PC-3 (cell line): ENCODE measurements at regions of chr4 and their contacts with region 1.

Region 1: GRCh38 chr4:38675146-38676121 is 11.4 kb downstream of the KLF3 start:
- DNase-seq: peak; percentile 87
- ATAC-seq: peak; percentile 16; the same call in 1 of the 2 replicates
- H3K4me3 ChIP-seq: peak overlapping the region; percentile 46; the same call in 1 of the 2 replicates
- H3K27ac ChIP-seq: peak overlapping the region; percentile 85
- H3K4me1 ChIP-seq: peaks cover 51% of the 10 kb centered on the region
- H3K27me3 ChIP-seq: no peaks in the 10 kb centered on the region
- CTCF ChIP-seq: peak; percentile 88

Region 2: DNA sequence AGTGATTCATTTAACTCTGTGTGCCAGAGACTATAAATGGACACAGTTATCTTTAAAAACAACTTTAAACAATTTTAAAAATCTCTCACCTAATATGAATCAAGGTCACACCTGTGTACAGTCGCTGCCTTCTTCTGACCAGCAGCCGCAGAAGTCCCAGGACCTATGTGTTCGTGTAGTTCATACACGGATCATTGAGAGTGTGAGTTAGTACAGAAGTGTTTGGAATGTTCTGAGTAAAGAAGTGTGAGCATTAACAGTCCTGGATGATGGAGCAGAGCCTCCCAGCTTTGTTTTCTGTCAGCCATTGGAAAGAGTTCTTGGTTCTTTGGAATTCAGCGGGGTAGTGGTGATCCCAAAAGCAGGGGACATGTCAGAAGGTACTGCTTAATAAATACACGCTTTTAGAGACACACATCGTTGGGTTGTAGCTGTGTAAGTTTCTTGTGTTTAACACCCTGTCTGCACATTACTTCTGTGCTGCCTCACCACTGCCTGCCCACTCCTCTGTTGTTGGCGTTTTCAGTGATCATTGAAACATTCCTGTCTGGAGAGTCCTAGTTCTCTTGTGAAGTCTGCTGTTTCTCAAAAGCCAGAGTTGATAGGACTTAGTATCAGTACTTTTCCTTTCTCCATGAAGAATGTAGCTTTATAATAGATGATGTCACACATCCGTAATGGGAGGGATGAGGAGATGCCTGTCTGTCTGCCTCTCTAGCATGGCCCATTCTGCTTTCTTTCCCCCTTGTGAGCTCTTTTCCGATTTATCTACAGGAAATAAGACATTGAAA is 624.7 kb before region 1 on chr4:
- CTCF ChIA-PET with region 1: no interaction called
- POLR2A ChIA-PET with region 1: no interaction called
- intact Hi-C with region 1: loop called (anchors 5 kb)
- DNase-seq: no peak
- ATAC-seq: no peak
- H3K4me3 ChIP-seq: peak overlapping the region; percentile 60; the same call in 1 of the 2 replicates
- H3K27ac ChIP-seq: peak overlapping the region; percentile 68
- H3K4me1 ChIP-seq: peaks cover 30% of the 10 kb centered on the region
- H3K27me3 ChIP-seq: no peaks in the 10 kb centered on the region
- CTCF ChIP-seq: no peak

Region 3: DNA sequence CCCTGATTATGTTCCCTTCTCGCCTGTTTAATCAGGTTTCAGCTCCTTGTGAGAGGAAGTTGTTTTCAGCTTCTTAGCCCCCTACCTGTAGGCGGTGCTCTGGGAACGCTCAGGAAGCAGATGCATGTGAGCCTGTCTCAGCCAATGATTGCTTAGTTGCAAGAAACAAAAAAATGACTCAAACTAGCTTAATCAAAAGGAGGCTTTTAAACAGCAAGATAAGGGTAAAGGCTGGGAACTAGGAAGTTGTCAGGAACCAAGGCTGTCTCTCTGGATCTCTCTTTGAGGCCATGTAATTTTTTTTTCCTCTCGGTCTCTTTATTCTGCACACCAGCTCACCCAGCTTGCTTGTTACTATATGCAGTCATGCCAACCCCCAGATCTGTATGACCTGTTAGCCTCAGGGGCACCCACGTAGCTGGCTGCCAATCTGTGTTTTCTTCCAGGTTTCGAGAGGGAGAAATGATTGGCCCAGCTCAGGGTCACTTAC is 606.1 kb before region 1 on chr4:
- CTCF ChIA-PET with region 1: no interaction called
- POLR2A ChIA-PET with region 1: no interaction called
- intact Hi-C with region 1: loop called (anchors 5 kb)
- DNase-seq: peak; percentile 77
- ATAC-seq: peak; percentile 88
- H3K4me3 ChIP-seq: no peak overlapping the region
- H3K27ac ChIP-seq: no peak overlapping the region
- H3K4me1 ChIP-seq: peaks cover 6% of the 10 kb centered on the region
- H3K27me3 ChIP-seq: no peaks in the 10 kb centered on the region
- CTCF ChIP-seq: peak; percentile 91

Region 4: DNA sequence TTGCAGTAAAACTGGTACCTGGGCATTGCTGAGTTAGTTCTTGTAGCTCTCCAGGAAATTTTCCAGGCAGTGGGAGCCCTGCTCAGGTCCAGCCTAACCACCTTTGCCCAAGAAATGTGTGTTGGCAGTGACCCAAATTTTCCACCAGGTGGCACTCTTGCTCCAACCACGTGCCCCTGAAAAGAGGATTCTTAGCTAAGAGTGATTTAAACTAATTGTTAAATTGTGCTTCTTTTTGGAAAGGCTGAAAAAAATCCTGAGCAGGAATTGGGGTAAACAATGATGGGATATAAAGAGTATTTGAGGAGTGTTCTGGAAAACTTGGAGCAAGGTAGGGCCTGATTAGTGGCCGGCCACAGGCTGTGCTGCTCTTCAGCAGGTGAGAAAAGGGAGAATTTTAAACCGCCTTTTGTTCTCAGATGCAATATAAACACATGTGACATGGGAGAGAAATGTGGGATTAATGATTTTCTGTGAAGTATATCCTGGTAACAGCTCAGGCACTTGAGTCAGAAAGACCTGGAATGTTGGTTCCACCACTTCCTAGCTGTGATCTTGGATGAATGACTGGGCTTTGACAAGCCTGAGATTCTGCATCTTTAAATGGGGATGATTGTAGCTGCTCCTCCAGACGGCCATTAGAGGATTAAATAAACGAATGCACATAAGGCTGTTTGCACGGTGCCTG is 495.6 kb before region 1 on chr4:
- CTCF ChIA-PET with region 1: interaction called, 11 read pairs
- POLR2A ChIA-PET with region 1: no interaction called
- intact Hi-C with region 1: loop called (anchors 2 kb)
- DNase-seq: peak; percentile 78
- ATAC-seq: peak; percentile 86
- H3K4me3 ChIP-seq: no peak overlapping the region
- H3K27ac ChIP-seq: peak overlapping the region; percentile 72
- H3K4me1 ChIP-seq: peaks cover 15% of the 10 kb centered on the region
- H3K27me3 ChIP-seq: no peaks in the 10 kb centered on the region
- CTCF ChIP-seq: peak; percentile 90

Region 5: GRCh38 chr4:38319456-38320342 is 355.7 kb before region 1 on chr4:
- CTCF ChIA-PET with region 1: interaction called, 11 read pairs
- POLR2A ChIA-PET with region 1: interaction called, 12 read pairs
- intact Hi-C with region 1: loop called (anchors 2 kb)
- DNase-seq: peak; percentile 94
- ATAC-seq: peak; percentile 72
- H3K4me3 ChIP-seq: peak overlapping the region; percentile 43; the same call in 1 of the 2 replicates
- H3K27ac ChIP-seq: peak overlapping the region; percentile 82
- H3K4me1 ChIP-seq: peaks cover 29% of the 10 kb centered on the region
- H3K27me3 ChIP-seq: no peaks in the 10 kb centered on the region
- CTCF ChIP-seq: peak; percentile 86

Region 6: DNA sequence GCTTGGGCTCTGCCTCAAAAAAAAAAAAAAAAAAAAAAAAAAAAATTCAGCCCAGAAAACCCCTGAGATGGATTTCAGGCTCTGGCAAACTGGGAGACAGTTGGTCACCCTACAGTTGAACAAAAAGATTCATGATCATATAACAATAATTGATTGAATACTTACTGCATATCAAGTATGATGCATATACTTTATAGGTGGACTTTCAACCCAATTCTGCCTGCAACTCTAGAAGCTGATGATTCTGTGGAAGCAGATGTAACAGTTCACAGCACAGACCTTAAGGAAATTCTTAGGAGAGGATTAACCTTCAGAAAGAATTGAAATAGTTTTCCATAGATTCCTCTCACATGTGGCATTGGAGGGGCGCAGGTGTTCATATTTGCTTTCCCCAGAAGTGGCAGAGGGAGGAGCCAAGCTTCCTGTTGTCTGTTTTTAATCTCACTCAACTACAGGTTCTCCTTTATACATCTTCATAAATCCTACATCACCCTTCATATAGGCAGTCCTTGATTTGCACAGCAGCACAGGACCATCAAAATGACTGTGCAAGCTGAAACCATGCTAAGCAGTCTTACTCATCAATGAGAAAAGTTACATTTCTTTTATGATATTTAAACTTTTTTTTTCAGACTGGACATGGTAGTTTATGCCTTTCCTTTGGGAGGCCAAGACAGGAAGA is 160.8 kb before region 1 on chr4:
- CTCF ChIA-PET with region 1: no interaction called
- POLR2A ChIA-PET with region 1: no interaction called
- intact Hi-C with region 1: loop called (anchors 10 kb)
- DNase-seq: no peak
- ATAC-seq: no peak
- H3K4me3 ChIP-seq: no peak overlapping the region
- H3K27ac ChIP-seq: no peak overlapping the region
- H3K4me1 ChIP-seq: no peaks in the 10 kb centered on the region
- H3K27me3 ChIP-seq: no peaks in the 10 kb centered on the region
- CTCF ChIP-seq: no peak

Region 7: DNA sequence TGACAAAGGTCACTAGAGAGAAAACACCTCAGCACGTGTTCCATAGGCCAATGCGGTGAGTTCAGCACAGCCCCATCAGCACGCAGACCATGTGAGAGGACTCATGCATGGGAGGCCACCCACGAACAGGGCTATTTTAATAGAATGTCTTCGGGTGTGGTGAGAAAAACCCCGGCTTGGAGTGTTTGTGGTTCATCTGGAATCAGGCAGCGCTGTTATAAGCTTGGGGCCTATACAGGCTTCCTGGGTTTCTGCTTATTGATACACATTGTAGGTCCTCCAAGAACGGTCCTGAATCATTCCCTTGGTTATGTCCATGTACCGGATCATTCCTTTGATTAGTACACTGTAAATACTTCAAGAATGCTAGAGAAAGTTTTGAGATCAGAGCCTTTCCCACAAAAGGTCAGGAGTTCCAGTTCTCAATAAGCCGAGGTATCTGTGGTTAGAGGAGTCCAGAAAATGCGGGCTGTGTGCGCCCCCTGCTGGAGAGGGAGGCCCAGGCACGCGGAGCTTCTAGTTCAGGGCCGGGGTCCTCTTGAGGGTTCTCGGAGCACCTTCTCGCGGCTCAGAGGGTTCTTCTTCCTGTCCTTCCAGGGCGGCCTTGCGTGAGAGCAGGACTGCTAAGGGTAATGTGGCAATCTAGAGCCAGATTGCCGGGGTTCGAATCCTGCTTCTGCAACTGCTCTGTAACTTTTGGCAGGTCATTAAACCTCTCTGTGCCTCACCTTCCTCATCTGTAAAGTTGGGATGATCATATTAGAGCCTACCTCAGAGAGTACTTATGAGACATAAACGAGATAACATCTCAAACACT is 55.6 kb after region 1 on chr4:
- CTCF ChIA-PET with region 1: no interaction called
- POLR2A ChIA-PET with region 1: no interaction called
- intact Hi-C with region 1: loop called (anchors 5 kb)
- DNase-seq: peak; percentile 73
- ATAC-seq: peak; percentile 67
- H3K4me3 ChIP-seq: no peak overlapping the region
- H3K27ac ChIP-seq: no peak overlapping the region
- H3K4me1 ChIP-seq: peaks cover 18% of the 10 kb centered on the region
- H3K27me3 ChIP-seq: no peaks in the 10 kb centered on the region
- CTCF ChIP-seq: peak; percentile 94